Common myeloid progenitor, CD34-positive (primary cell): ENCODE measurements at regions of chr12 and their contacts with region 1.

Region 1: GRCh38 chr12:52278541-52279421 is 4.3 kb downstream of the KRT86 start:
- DNase-seq: peak; percentile 45 to 69 (median 61)
- H3K4me3 ChIP-seq: peak overlapping the region in 1 of 7 experiments; percentile 47
- H3K27ac ChIP-seq: no peak overlapping the region
- H3K4me1 ChIP-seq: peaks cover 0 to 7% (median 0%) of the 10 kb centered on the region in 4 experiments
- H3K27me3 ChIP-seq: peaks cover 0 to 20% (median 10%) of the 10 kb centered on the region in 5 experiments

Region 2: GRCh38 chr12:52213512-52214420 is 65.0 kb before region 1 on chr12:
- CTCF ChIA-PET with region 1: interaction called, 12 read pairs
- POLR2A ChIA-PET with region 1: no interaction called
- DNase-seq: peak; percentile 61 to 78 (median 67)
- H3K4me3 ChIP-seq: no peak overlapping the region
- H3K27ac ChIP-seq: no peak overlapping the region
- H3K4me1 ChIP-seq: no peaks in the 10 kb centered on the region
- H3K27me3 ChIP-seq: peaks cover 0 to 7% (median 0%) of the 10 kb centered on the region in 5 experiments

Region 3: GRCh38 chr12:52230327-52231291 is 48.2 kb before region 1 on chr12:
- CTCF ChIA-PET with region 1: interaction called, 10 read pairs
- POLR2A ChIA-PET with region 1: no interaction called
- DNase-seq: no peak
- H3K4me3 ChIP-seq: no peak overlapping the region
- H3K27ac ChIP-seq: no peak overlapping the region
- H3K4me1 ChIP-seq: peaks cover 0 to 8% (median 1%) of the 10 kb centered on the region in 4 experiments
- H3K27me3 ChIP-seq: peaks cover 0 to 62% (median 24%) of the 10 kb centered on the region in 5 experiments

Region 4: GRCh38 chr12:52243856-52244614 is 34.7 kb before region 1 on chr12:
- CTCF ChIA-PET with region 1: interaction called, 49 read pairs
- POLR2A ChIA-PET with region 1: no interaction called
- DNase-seq: peak; percentile 86 to 97 (median 97)
- H3K4me3 ChIP-seq: peak overlapping the region in 1 of 7 experiments; percentile 30
- H3K27ac ChIP-seq: peak overlapping the region; percentile 17 to 55
- H3K4me1 ChIP-seq: peaks cover 0 to 25% (median 15%) of the 10 kb centered on the region in 4 experiments
- H3K27me3 ChIP-seq: peaks cover 0 to 14% (median 7%) of the 10 kb centered on the region in 5 experiments

Region 5: DNA sequence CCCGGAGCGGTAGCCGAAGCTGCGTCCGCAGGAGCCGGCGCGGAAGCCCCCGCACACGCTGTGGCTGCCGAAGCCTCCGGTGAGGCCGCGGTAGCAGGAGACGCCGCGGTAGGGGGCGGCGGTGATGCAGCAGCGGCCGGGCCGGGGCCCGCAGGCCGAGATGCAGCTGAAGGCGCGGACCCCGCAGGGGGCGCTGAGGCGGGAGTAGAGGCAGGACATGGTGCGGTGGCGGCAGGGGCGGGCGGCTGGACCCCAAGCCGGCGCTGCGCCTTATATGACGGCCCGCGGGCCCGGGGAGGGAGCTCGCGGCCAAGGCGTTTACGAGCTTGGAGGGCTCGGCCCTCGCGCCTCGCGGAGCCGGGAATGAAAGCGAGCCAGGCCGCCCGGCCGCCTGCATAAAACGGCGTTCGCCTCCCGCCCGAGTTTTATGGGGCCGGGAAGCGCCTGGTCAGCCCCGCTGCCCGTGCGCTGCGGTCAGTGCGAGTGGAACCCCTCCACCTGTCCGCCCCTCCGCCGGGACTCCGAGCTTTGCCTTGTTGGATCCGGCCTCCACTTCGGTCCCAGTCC is 20.4 kb before region 1 on chr12:
- CTCF ChIA-PET with region 1: interaction called, 133 read pairs
- POLR2A ChIA-PET with region 1: interaction called, 3 read pairs
- DNase-seq: peak in 2 of 3 donors; percentile 24 to 42
- H3K4me3 ChIP-seq: peak overlapping the region in 2 of 7 experiments; percentile 6 to 38
- H3K27ac ChIP-seq: no peak overlapping the region
- H3K4me1 ChIP-seq: peaks cover 13 to 44% (median 36%) of the 10 kb centered on the region in 4 experiments
- H3K27me3 ChIP-seq: peaks cover 3 to 69% (median 47%) of the 10 kb centered on the region in 5 experiments

Region 6: DNA sequence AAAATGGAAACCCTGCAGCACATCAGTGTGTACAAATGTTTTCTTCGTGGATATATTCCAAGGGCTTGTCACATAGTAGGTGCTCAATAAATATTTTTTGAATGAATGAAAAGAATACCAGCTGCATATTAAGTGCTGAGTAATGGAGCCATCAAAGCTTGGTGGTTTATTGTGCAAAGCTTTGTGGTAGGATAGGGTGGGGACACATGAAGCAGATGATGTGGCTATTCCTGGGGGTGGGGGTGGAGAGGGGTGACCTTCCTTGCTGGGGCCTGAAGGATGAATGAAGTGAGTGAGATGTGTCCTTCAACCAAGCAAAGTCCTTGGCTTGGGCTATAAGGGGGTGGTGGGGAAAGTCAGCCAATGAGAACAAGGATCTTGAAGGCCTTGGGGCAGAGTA is 16.9 kb after region 1 on chr12:
- CTCF ChIA-PET with region 1: interaction called, 32 read pairs
- POLR2A ChIA-PET with region 1: no interaction called
- DNase-seq: peak in 2 of 3 donors; percentile 47 to 57
- H3K4me3 ChIP-seq: no peak overlapping the region
- H3K27ac ChIP-seq: no peak overlapping the region
- H3K4me1 ChIP-seq: peaks cover 0 to 10% (median 0%) of the 10 kb centered on the region in 4 experiments
- H3K27me3 ChIP-seq: peaks cover 0 to 8% (median 2%) of the 10 kb centered on the region in 5 experiments

Region 7: GRCh38 chr12:52319097-52319496 is 40.3 kb after region 1 on chr12:
- CTCF ChIA-PET with region 1: interaction called, 12 read pairs
- POLR2A ChIA-PET with region 1: no interaction called
- DNase-seq: peak; percentile 16 to 66 (median 61)
- H3K4me3 ChIP-seq: no peak overlapping the region
- H3K27ac ChIP-seq: no peak overlapping the region
- H3K4me1 ChIP-seq: no peaks in the 10 kb centered on the region
- H3K27me3 ChIP-seq: peaks cover 2 to 41% (median 12%) of the 10 kb centered on the region in 5 experiments

Region 8: DNA sequence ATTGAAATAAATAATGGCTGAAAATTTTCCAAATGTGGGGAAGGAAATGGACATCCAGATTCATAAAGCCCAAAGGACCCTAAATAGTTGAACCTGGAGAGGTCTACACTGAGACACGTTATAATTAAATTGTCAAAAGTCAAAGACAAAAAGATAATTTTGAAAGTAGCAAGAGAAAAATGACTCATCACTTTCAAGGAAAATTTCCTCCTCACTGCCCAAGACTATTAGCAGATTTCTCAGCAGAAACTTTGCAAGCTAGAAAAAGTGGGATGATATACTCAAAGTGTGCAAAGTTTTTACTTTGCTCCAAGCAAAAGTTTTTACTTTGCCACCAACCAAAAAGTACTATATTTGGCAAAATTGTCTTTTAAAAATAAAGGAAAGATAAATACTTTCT is 58.3 kb after region 1 on chr12:
- CTCF ChIA-PET with region 1: no interaction called
- POLR2A ChIA-PET with region 1: no interaction called
- DNase-seq: peak in 2 of 3 donors; percentile 13 to 33
- H3K4me3 ChIP-seq: no peak overlapping the region
- H3K27ac ChIP-seq: no peak overlapping the region
- H3K4me1 ChIP-seq: no peaks in the 10 kb centered on the region
- H3K27me3 ChIP-seq: peaks cover 0 to 5% (median 0%) of the 10 kb centered on the region in 5 experiments